Esophagus squamous epithelium (tissue), 5 donors: ENCODE measurements at regions of chr13 and their contacts with region 1.

Region 1: GRCh38 chr13:41652727-41653361 is 195.5 kb downstream of the RGCC start:
- DNase-seq: no peak
- H3K4me3 ChIP-seq: no peak overlapping the region
- H3K27ac ChIP-seq: no peak overlapping the region
- H3K4me1 ChIP-seq: peaks cover 0 to 15% (median 0%) of the 10 kb centered on the region in 3 donors
- H3K27me3 ChIP-seq: no peaks in the 10 kb centered on the region
- CTCF ChIP-seq: peak in 5 of 6 experiments; percentile 52 to 73 (median 59)
- POLR2A ChIP-seq: no peak

Region 2: DNA sequence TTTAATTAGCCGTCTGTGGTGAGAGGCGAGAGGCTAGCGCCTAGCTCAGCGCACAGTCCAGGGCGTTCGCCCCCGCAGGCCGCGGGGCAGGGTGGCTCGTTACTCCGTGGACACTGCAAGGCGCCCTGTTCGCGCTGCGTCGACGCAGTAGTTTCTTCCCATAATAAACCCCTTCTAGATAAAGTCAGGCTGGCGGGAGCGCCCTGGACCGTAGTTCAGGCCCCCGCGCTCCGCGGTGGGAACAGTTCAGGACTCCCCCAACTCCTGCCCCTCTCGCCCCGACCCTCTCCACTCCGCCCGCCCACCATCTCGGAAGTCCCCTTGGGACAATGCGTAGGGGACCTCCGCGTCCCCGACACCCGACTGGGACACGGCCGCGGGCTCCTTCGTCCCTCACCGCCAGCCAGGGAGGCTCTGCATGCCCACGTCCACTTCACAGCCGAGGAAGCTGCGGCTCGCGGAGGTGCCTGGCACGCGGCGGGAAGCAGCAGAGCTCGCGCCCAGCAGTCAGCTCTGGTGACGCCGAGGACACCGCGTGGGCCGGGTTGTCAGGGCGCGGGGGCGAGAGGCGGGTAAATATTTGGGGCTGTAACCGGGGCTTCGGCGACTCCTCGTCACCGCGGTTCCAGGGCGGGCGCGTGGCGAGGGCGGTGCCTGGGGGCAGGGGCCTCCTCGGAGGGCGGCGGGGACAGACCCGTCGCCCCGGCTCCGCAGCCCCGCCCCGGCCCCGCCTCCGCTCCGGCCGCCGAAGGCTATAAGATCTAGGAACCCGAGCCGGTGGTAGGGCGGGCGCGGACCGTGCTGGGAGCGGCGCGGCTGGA is 195.9 kb before region 1 on chr13 and contains the start of gene RGCC:
- intact Hi-C with region 1: loop called (anchors 10 kb)
- DNase-seq: peak; percentile 24
- H3K4me3 ChIP-seq: peak within 1 kb of the TSS; percentile 57 to 83 (median 66)
- H3K27ac ChIP-seq: peak within 1 kb of the TSS; percentile 70 to 77 (median 71)
- H3K4me1 ChIP-seq: peaks cover 9 to 38% (median 15%) of the 10 kb centered on the region in 3 donors
- H3K27me3 ChIP-seq: peaks cover 0 to 48% (median 0%) of the 10 kb centered on the region in 4 donors
- CTCF ChIP-seq: no peak
- POLR2A ChIP-seq: peak in 2 of 4 donors; percentile 13 to 81
- total RNA-seq, gene RGCC: 8.5 to 39.7 (median 16.7) TPM